CD4-positive, alpha-beta T cell (primary cell): ENCODE measurements at regions of chr13 and their contacts with region 1.

Region 1: GRCh38 chr13:99237981-99238662 is 20.1 kb downstream of the GPR18 start:
- DNase-seq: peak in 5 of 14 experiments; percentile 26 to 73 (median 62)
- ATAC-seq: peak; percentile 77
- H3K4me3 ChIP-seq: peak overlapping the region; percentile 45
- H3K4me3 Mint-ChIP-seq: peak overlapping the region; percentile 83
- H3K27ac ChIP-seq: peak overlapping the region; percentile 72 to 73
- H3K27ac Mint-ChIP-seq: peak overlapping the region; percentile 94
- H3K4me1 ChIP-seq: peaks cover 32% of the 10 kb centered on the region
- H3K4me1 Mint-ChIP-seq: peaks cover 72% of the 10 kb centered on the region
- H3K27me3 ChIP-seq: no peaks in the 10 kb centered on the region
- H3K27me3 Mint-ChIP-seq: no peaks in the 10 kb centered on the region
- CTCF ChIP-seq: no peak

Region 2: GRCh38 chr13:99124794-99125316 is 113.3 kb before region 1 on chr13:
- CTCF ChIA-PET with region 1: no interaction called
- POLR2A ChIA-PET with region 1: no interaction called
- intact Hi-C with region 1: no loop called
- DNase-seq: peak in 4 of 14 experiments; percentile 19 to 55 (median 26)
- ATAC-seq: peak; percentile 43
- H3K4me3 ChIP-seq: no peak overlapping the region
- H3K4me3 Mint-ChIP-seq: no peak overlapping the region
- H3K27ac ChIP-seq: no peak overlapping the region
- H3K27ac Mint-ChIP-seq: no peak overlapping the region
- H3K4me1 ChIP-seq: peaks cover 7% of the 10 kb centered on the region
- H3K4me1 Mint-ChIP-seq: peaks cover 23% of the 10 kb centered on the region
- H3K27me3 ChIP-seq: no peaks in the 10 kb centered on the region
- H3K27me3 Mint-ChIP-seq: no peaks in the 10 kb centered on the region
- CTCF ChIP-seq: no peak

Region 3: DNA sequence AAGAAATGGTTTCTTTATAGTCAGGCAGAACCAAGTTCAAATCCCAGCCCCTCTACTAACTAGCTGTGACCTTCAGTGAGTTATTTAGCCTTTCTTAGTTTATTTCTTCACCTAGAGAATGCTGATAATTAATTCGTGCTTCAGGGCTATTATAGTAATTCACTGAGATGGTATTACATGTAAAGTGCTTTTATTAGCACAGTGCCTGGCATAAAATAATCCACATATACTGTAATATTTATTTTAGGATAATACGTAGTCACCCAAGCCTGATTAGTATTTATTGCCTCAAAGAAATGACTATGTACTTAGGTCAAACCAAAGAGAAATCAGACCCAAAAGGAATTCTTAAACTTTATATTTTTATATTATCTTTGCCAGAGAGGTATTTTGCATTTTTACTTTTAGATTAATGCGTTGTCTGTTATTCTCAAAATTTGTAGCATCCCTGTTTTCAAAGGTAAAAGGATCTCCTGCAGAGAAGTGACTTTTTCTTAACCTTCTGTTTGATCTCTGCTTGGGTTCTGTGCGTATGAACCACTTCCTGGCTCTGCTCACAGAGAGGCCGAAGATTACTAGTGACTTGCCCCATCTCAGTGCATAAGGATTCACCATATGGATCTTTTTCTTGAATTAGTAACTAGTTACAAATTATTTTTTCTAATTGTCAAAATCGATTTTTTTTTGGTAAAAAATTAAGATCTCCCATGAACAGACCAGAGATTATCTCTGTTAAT is 17.8 kb before region 1 on chr13:
- CTCF ChIA-PET with region 1: interaction called, 4 read pairs
- POLR2A ChIA-PET with region 1: interaction called, 18 read pairs
- intact Hi-C with region 1: loop called in 1 of 2 experiments (anchors 2 kb)
- DNase-seq: peak in 7 of 14 experiments; percentile 24 to 82 (median 55)
- ATAC-seq: peak; percentile 37
- H3K4me3 ChIP-seq: peak overlapping the region; percentile 8
- H3K4me3 Mint-ChIP-seq: peak overlapping the region; percentile 63
- H3K27ac ChIP-seq: peak overlapping the region; percentile 0 to 65
- H3K27ac Mint-ChIP-seq: peak overlapping the region; percentile 100
- H3K4me1 ChIP-seq: peaks cover 63% of the 10 kb centered on the region
- H3K4me1 Mint-ChIP-seq: peaks cover 94% of the 10 kb centered on the region
- H3K27me3 ChIP-seq: no peaks in the 10 kb centered on the region
- H3K27me3 Mint-ChIP-seq: no peaks in the 10 kb centered on the region
- CTCF ChIP-seq: no peak